ENCODE measurements at regions of chr1 and their contacts with region 1.

Region 1: DNA sequence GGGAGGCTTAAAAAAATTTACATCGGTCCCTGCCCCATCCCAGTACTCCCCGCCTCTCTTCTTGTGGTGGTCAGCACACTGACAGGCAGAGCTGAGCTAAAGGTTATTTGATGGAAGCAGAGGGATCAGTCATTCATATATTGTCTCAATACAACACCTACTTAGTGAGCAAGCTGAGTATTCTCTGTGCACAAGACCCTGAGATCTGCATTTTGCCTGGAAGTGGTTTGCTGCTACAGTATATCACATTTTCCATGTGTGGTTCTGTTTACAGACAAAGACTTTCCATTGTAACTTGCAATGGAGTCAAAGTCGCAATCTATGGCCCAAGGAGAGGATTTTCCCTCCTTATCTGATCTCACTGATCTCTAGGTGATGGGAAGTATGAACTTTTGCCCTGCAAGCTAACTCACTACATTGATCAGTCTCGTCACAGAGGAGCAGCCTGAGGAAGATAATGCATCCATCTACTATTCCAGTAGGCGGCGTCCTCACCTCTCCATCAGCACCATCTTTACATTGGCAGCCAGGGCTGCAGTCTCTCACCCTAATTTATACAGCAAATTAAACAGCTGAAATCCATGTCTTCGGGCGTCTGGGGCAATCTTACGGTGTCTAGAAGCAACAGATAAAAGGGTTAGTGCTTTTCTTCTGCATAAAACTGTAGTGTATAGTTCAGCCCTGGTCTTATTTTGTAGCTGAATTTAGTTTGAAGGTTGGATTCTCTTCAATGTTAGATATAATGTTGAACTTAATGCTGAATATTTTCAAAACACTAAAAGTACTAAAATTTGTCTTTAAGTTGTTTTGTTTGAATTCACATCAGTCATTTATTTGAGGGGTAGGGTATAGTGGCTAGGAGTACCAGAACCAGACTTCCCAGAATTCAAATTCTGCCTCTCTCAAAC is 3.2 kb upstream of the TRAF5 start:
- DNase-seq: peak; percentile 85
- H3K4me3 Mint-ChIP-seq: no peak overlapping the region
- H3K27ac Mint-ChIP-seq: no peak overlapping the region
- H3K4me1 Mint-ChIP-seq: peaks cover 58% of the 10 kb centered on the region
- H3K27me3 Mint-ChIP-seq: no peaks in the 10 kb centered on the region

Region 2: DNA sequence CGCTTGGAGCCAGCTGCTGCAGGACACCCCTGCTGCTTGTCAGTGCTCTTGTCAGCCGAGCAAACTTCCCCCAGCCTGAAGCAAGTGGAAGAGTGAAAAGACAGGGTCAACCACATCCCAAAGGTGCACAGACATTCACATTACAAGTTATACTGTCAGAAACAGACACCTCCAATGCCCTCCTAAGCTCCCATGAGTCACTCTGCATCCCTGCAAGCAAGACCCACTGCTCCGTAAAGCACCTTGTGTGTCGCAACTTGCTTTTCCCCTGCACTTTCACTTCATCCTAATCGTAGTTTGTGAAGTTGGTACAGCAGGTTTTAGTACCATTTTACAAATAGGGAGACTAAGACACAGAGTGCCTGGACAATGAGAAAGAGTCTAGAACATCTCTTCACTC is 240.6 kb before region 1 on chr1:
- CTCF ChIA-PET with region 1: no interaction called
- intact Hi-C with region 1: no loop called
- DNase-seq: no peak
- H3K4me3 Mint-ChIP-seq: no peak overlapping the region
- H3K27ac Mint-ChIP-seq: no peak overlapping the region
- H3K4me1 Mint-ChIP-seq: no peaks in the 10 kb centered on the region
- H3K27me3 Mint-ChIP-seq: no peaks in the 10 kb centered on the region

Region 3: GRCh38 chr1:211296396-211296795 is 27.0 kb before region 1 on chr1:
- CTCF ChIA-PET with region 1: interaction called, 10 read pairs
- intact Hi-C with region 1: no loop called
- DNase-seq: no peak
- H3K4me3 Mint-ChIP-seq: no peak overlapping the region
- H3K27ac Mint-ChIP-seq: no peak overlapping the region
- H3K4me1 Mint-ChIP-seq: peaks cover 23% of the 10 kb centered on the region
- H3K27me3 Mint-ChIP-seq: no peaks in the 10 kb centered on the region

Region 4: DNA sequence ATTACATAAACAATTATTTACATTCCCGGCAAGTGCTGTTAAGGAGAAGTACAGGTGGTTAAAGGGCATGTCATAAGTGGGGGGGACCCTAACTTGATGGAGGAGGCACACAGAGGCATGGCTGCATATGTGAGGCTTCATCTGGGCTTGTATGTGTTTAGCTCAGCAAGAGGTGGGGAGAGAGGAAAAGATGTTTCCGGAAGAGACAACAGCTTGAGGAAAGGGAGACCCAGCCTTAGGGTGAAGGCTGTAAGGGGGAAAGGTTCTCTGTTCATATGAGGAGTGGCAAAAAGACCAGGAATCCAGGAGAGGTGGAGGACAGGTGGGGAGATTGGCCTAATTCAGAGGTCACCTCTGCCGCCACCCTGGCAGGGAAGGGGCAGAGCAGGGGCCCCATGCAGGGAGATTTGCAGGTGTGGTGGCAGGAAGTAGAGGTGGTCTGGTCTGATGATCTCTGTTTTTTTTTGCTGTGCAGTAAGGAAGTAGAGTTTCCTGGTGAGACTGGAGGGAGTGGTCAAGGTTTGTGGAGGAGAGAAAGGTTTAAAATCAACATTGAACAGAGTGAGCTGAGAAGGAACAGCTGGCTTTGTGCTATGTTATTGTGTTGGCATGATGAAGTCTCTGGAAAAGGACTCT is 12.2 kb after region 1 on chr1:
- CTCF ChIA-PET with region 1: interaction called, 16 read pairs
- intact Hi-C with region 1: loop called (anchors 1 kb)
- DNase-seq: peak; percentile 42
- H3K4me3 Mint-ChIP-seq: peak overlapping the region; percentile 49
- H3K27ac Mint-ChIP-seq: peak overlapping the region; percentile 85
- H3K4me1 Mint-ChIP-seq: peaks cover 84% of the 10 kb centered on the region
- H3K27me3 Mint-ChIP-seq: no peaks in the 10 kb centered on the region

Region 5: DNA sequence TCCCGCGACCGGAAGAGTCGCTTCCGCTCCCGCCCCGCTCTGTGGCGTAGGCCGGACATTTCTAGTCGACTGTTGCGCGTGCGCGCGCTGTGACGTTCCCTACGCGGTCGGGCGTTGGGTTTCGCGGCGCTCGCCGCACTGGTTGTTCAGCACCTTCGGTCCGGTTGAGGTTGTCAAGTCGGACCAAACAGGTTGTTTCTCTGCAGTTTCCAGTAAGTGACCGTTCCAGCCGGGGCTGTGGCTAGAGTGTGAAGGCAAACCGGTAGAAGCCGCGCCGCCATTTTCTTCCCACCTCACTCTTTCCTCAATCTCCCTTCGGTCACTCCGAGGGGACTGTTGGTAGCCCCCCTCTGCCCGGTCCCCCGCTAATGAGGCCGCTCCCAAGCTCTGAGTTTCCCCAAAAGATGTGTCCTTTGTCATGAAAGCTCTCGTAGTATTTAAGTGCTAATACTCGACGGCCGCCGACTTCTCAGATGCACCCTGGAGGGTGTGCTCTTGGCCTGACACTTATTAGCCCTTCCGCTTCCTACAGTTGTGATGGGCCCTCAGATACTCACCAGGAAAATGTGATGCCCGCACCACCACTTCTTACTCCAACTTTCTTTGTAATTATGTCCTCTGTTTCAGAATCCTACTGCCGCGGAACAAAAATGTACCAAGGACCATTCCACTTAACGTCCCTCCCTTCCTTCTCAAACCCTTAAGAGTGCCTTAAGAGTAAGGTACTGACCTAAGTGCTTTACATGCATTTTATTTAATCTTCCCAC is 59.5 kb after region 1 on chr1:
- CTCF ChIA-PET with region 1: interaction called, 6 read pairs
- intact Hi-C with region 1: loop called (anchors 1 kb)
- DNase-seq: peak; percentile 80
- H3K4me3 Mint-ChIP-seq: peak overlapping the region; percentile 89
- H3K27ac Mint-ChIP-seq: peak overlapping the region; percentile 92
- H3K4me1 Mint-ChIP-seq: peaks cover 40% of the 10 kb centered on the region
- H3K27me3 Mint-ChIP-seq: no peaks in the 10 kb centered on the region

Region 6: GRCh38 chr1:211476200-211476849 is 152.9 kb after region 1 on chr1:
- CTCF ChIA-PET with region 1: interaction called, 15 read pairs
- intact Hi-C with region 1: loop called (anchors 1 kb)
- DNase-seq: peak; percentile 90
- H3K4me3 Mint-ChIP-seq: no peak overlapping the region
- H3K27ac Mint-ChIP-seq: no peak overlapping the region
- H3K4me1 Mint-ChIP-seq: no peaks in the 10 kb centered on the region
- H3K27me3 Mint-ChIP-seq: peaks cover 16% of the 10 kb centered on the region

Region 7: GRCh38 chr1:211625040-211625439 is 301.6 kb after region 1 on chr1:
- CTCF ChIA-PET with region 1: no interaction called
- intact Hi-C with region 1: no loop called
- DNase-seq: peak; percentile 60
- H3K4me3 Mint-ChIP-seq: no peak overlapping the region
- H3K27ac Mint-ChIP-seq: no peak overlapping the region
- H3K4me1 Mint-ChIP-seq: peaks cover 10% of the 10 kb centered on the region
- H3K27me3 Mint-ChIP-seq: no peaks in the 10 kb centered on the region

Region 8: GRCh38 chr1:211654838-211655787 is 331.7 kb after region 1 on chr1:
- CTCF ChIA-PET with region 1: interaction called, 3 read pairs
- intact Hi-C with region 1: loop called (anchors 1 kb)
- DNase-seq: peak; percentile 89
- H3K4me3 Mint-ChIP-seq: no peak overlapping the region
- H3K27ac Mint-ChIP-seq: no peak overlapping the region
- H3K4me1 Mint-ChIP-seq: no peaks in the 10 kb centered on the region
- H3K27me3 Mint-ChIP-seq: no peaks in the 10 kb centered on the region

Measured in activated naive CD4-positive, alpha-beta T cell treated with anti-CD3 and anti-CD28 coated beads for 36 hours (primary cell).